ENCODE measurements at regions of chr6 and their contacts with region 1.

Region 1: DNA sequence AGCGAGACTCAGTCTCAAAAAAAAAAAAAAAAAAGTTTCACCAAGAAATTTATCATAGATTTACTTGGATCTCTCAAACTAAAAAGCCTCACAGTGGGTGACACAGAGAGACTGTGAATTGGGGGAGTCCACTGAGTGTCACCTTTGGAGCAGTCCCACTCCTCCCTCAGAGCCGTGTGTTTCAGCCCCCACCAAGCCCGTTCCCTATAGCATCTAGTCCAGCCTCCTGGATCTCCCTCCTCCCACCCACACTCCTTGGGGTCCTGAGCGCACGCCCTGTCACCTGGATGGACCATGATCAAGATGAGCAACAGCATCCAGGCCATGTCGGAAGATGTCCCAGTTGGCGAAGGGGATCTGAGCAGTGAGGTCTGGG is 422 bp downstream of the NCR3 start:
- DNase-seq: no peak
- H3K4me3 ChIP-seq: no peak overlapping the region
- H3K27ac ChIP-seq: no peak overlapping the region
- H3K4me1 ChIP-seq: peaks cover 0 to 3% (median 0%) of the 10 kb centered on the region in 3 donors
- H3K27me3 ChIP-seq: peaks cover 0 to 9% (median 0%) of the 10 kb centered on the region in 4 donors
- CTCF ChIP-seq: no peak
- POLR2A ChIP-seq: no peak

Region 2: GRCh38 chr6:31559958-31560696 is 32.3 kb before region 1 on chr6:
- intact Hi-C with region 1: loop called (anchors 5 kb)
- DNase-seq: no peak
- H3K4me3 ChIP-seq: peak overlapping the region in 1 of 4 donors; percentile 8
- H3K27ac ChIP-seq: peak overlapping the region; percentile 9 to 63 (median 52)
- H3K4me1 ChIP-seq: peaks cover 5 to 50% (median 17%) of the 10 kb centered on the region in 3 donors
- H3K27me3 ChIP-seq: no peaks in the 10 kb centered on the region
- CTCF ChIP-seq: no peak
- POLR2A ChIP-seq: no peak

Region 3: GRCh38 chr6:31834434-31835198 is 242.2 kb after region 1 on chr6:
- intact Hi-C with region 1: no loop called
- DNase-seq: peak; percentile 21
- H3K4me3 ChIP-seq: peak overlapping the region; percentile 81 to 99 (median 90)
- H3K27ac ChIP-seq: peak overlapping the region; percentile 92 to 98 (median 96)
- H3K4me1 ChIP-seq: peaks cover 22 to 83% (median 54%) of the 10 kb centered on the region in 3 donors
- H3K27me3 ChIP-seq: no peaks in the 10 kb centered on the region
- CTCF ChIP-seq: no peak
- POLR2A ChIP-seq: peak in 3 of 4 donors; percentile 4 to 57 (median 56)